Activated naive CD4-positive, alpha-beta T cell treated with anti-CD3 and anti-CD28 coated beads for 36 hours (primary cell): ENCODE measurements at regions of chr6 and their contacts with region 1.

Region 1: GRCh38 chr6:44649365-44650025 is 262.0 kb downstream of the CDC5L start:
- DNase-seq: no peak
- H3K4me3 Mint-ChIP-seq: no peak overlapping the region
- H3K27ac Mint-ChIP-seq: no peak overlapping the region
- H3K4me1 Mint-ChIP-seq: peaks cover 2% of the 10 kb centered on the region
- H3K27me3 Mint-ChIP-seq: no peaks in the 10 kb centered on the region

Region 2: GRCh38 chr6:44593539-44593944 is 56.0 kb before region 1 on chr6:
- CTCF ChIA-PET with region 1: no interaction called
- intact Hi-C with region 1: loop called (anchors 5 kb)
- DNase-seq: peak; percentile 78
- H3K4me3 Mint-ChIP-seq: no peak overlapping the region
- H3K27ac Mint-ChIP-seq: no peak overlapping the region
- H3K4me1 Mint-ChIP-seq: peaks cover 3% of the 10 kb centered on the region
- H3K27me3 Mint-ChIP-seq: peaks cover 4% of the 10 kb centered on the region